ENCODE measurements at regions of chr2 and their contacts with region 1.

Region 1: DNA sequence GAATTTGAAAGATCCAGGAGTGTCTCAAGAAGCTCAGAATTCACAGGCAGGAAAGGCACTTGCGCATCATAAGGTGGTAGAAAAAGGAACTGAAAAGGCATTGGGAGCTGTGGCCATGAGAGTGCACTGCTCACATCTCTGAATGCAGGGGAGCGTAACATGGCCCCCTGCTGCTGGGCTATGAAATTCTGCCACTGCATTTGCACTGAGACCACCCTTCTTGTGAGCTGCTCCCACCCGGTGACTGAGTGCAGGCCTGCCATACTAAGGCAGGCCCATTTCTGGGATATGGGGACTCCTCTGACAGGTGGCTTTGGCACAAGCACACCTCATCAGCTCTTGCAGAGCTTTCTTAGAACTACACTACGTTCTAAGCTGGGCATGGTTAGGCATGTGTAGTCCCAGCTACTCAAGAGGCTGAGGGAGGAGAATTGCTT is 25.3 kb upstream of the STARD7 start:
- DNase-seq: peak; percentile 37
- ATAC-seq: peak; percentile 99
- H3K4me3 Mint-ChIP-seq: peak overlapping the region; percentile 70
- H3K27ac Mint-ChIP-seq: peak overlapping the region; percentile 84
- H3K4me1 Mint-ChIP-seq: peaks cover 17% of the 10 kb centered on the region
- H3K27me3 Mint-ChIP-seq: no peaks in the 10 kb centered on the region
- CTCF ChIP-seq: no peak

Region 2: DNA sequence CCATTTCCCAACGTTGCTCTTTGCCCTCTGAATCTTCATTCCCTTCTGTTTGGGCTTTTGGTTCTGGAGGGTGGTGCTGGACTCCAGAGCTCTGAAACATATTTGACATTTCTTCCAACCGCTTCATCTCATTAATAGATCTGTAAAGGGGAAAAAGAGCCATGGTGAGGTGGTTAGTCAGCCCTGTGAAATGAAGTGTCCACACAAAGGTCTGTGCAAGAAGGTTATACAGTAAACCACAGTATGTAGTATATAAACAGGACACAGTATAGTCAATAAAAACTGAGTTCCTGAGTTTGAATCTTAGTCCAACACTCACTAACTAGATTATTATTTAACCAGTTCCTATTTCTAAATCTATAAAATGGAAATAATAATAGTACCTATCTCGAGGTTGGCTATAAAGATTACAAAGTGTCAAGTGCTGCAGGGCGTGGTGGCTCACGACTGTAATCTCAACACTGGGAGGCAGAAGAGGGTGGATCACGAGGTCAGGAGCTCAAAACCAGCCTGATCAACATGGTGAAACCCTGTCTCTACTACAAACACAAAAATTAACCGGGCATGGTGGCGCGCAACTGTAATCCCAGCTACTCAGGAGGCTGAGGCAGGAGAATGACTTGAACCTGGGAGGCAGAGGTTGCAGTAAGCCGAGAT is 38.4 kb before region 1 on chr2:
- CTCF ChIA-PET with region 1: interaction called, 9 read pairs
- POLR2A ChIA-PET with region 1: interaction called, 10 read pairs
- intact Hi-C with region 1: loop called (anchors 5 kb)
- DNase-seq: no peak
- ATAC-seq: no peak
- H3K4me3 Mint-ChIP-seq: no peak overlapping the region
- H3K27ac Mint-ChIP-seq: no peak overlapping the region
- H3K4me1 Mint-ChIP-seq: peaks cover 32% of the 10 kb centered on the region
- H3K27me3 Mint-ChIP-seq: no peaks in the 10 kb centered on the region
- CTCF ChIP-seq: no peak

Region 3: DNA sequence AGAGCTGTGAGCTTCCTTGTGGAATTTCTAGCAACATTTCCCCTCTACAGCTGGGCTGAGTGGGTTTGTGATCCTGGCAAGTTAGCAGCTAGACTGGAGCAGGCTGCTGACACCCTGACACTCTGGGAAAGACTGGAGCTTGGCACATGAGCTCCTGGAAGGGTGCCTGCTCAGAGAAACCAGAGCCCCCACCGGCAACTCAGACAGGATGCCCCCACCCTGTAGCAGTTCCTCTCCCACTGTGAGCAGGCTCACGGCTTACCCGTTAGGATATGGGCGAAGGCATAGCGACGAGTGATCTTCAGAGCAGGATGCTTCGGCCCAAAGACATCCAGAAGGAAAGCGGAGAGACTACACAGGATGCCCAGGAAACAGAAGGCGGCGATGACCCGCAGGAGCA is 20.7 kb after region 1 on chr2:
- CTCF ChIA-PET with region 1: interaction called, 22 read pairs
- POLR2A ChIA-PET with region 1: interaction called, 16 read pairs
- intact Hi-C with region 1: no loop called
- DNase-seq: no peak
- ATAC-seq: no peak
- H3K4me3 Mint-ChIP-seq: no peak overlapping the region
- H3K27ac Mint-ChIP-seq: no peak overlapping the region
- H3K4me1 Mint-ChIP-seq: peaks cover 50% of the 10 kb centered on the region
- H3K27me3 Mint-ChIP-seq: no peaks in the 10 kb centered on the region
- CTCF ChIP-seq: no peak

Region 4: GRCh38 chr2:96260404-96261260 is 26.7 kb after region 1 on chr2:
- CTCF ChIA-PET with region 1: interaction called, 22 read pairs
- POLR2A ChIA-PET with region 1: interaction called, 16 read pairs
- intact Hi-C with region 1: loop called (anchors 2 kb)
- DNase-seq: no peak
- ATAC-seq: peak; percentile 56
- H3K4me3 Mint-ChIP-seq: peak overlapping the region; percentile 36
- H3K27ac Mint-ChIP-seq: peak overlapping the region; percentile 80
- H3K4me1 Mint-ChIP-seq: peaks cover 89% of the 10 kb centered on the region
- H3K27me3 Mint-ChIP-seq: no peaks in the 10 kb centered on the region
- CTCF ChIP-seq: no peak

Region 5: GRCh38 chr2:96329416-96330269 is 95.7 kb after region 1 on chr2:
- CTCF ChIA-PET with region 1: no interaction called
- POLR2A ChIA-PET with region 1: no interaction called
- intact Hi-C with region 1: no loop called
- DNase-seq: no peak
- ATAC-seq: no peak
- H3K4me3 Mint-ChIP-seq: no peak overlapping the region
- H3K27ac Mint-ChIP-seq: no peak overlapping the region
- H3K4me1 Mint-ChIP-seq: peaks cover 29% of the 10 kb centered on the region
- H3K27me3 Mint-ChIP-seq: no peaks in the 10 kb centered on the region
- CTCF ChIP-seq: no peak

Measured in activated B cell treated with CpG ODN at 0.5 μM for 24 hours (primary cell).